Activated T-helper 1 cell treated with anti-CD3 and anti-CD28 coated beads, Interleukin-12 subunit alpha, Interleukin-12 subunit beta, Interleukin-2, Interleukin-4 antibody, amounts not matched to agents 30 ng/mL and 10 ng/mL and 1 ng/mL, durations not matched to agents 14 hours and 24 hours and 36 hours (primary cell): ENCODE measurements at regions of chr4 and their contacts with region 1.

Region 1: DNA sequence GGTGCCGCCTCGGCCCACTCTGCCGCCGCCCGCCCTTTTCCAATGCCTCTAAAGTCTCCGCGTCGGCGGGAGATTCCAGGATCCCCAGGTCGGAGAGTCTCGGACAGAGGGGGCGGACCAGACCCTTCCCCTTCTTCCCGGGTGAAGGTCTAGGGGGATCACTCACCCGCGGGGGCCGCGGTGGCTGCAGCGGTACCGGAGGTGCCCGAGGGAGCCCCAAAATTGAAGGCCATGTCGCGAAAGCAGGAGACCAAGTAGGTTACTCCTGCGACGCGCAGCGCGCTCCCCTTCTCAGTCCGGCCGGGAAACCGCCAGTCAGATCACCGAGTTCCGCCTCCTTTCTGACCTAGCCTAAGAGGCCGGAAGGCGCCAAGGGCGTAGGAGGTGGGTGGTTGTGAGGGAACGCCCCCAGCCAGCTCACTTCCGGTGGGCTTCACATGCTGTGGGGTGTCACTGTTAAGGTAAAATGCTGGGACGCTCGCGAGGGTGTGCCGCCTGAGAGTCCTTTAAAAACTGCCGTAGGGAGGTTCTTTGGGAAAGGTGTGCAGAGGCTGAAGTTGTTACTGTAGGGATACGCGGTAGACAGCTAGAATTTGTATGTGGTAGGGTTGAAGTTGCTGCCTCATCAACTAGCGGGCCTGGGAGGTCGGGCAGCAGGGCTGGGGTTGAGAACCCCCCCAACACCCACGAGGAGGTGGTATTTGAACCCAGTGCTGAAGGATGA is at the start of gene NUP54:
- DNase-seq: peak; percentile 94
- H3K4me3 Mint-ChIP-seq: peak within 1 kb of the TSS; percentile 99
- H3K27ac Mint-ChIP-seq: peak within 1 kb of the TSS; percentile 97
- H3K4me1 Mint-ChIP-seq: peaks cover 35% of the 10 kb centered on the region
- H3K27me3 Mint-ChIP-seq: no peaks in the 10 kb centered on the region
- total RNA-seq, gene NUP54: 70.6 and 75.1 TPM in 2 replicates

Region 2: GRCh38 chr4:75338352-75338880 is 809.9 kb before region 1 on chr4:
- intact Hi-C with region 1: no loop called
- DNase-seq: no peak
- H3K4me3 Mint-ChIP-seq: no peak overlapping the region
- H3K27ac Mint-ChIP-seq: no peak overlapping the region
- H3K4me1 Mint-ChIP-seq: no peaks in the 10 kb centered on the region
- H3K27me3 Mint-ChIP-seq: no peaks in the 10 kb centered on the region

Region 3: DNA sequence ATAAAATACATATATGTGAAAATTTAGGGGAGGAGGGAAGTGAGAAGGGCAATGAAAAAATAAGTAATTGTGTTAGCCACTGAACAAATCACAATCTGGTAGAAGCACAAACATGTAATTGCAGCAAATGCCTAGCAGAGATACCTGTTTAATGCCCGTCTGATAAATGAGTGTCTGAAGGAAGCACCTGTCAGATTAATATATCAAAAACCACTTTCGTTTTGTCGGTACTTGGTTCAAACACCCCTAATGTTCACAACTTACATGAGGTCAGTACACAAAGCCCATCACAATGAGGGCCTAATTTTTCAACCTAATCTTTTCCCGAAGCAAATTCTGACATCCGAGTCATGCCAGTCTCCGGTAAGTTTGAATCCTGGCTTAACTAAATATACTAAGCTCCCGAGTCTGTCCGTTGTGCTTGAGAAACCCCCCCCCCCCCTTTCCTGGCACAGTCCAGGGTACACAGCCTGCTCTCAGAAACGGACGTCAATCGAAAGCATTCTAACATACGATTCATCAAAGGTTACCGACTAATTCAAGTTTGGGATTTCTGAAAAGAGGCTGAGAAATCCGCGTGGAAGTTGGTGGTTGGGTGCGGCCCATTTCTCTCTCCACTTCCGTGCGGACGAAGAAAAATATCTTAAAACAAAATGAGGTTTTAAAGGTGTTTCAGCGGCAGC is 158.3 kb before region 1 on chr4:
- intact Hi-C with region 1: loop called (anchors 1 kb)
- DNase-seq: no peak
- H3K4me3 Mint-ChIP-seq: peak overlapping the region; percentile 93
- H3K27ac Mint-ChIP-seq: peak overlapping the region; percentile 83
- H3K4me1 Mint-ChIP-seq: peaks cover 27% of the 10 kb centered on the region
- H3K27me3 Mint-ChIP-seq: no peaks in the 10 kb centered on the region